Upper lobe of right lung (tissue), 1 donor: ENCODE measurements at regions of chr20 and their contacts with region 1.

Region 1: DNA sequence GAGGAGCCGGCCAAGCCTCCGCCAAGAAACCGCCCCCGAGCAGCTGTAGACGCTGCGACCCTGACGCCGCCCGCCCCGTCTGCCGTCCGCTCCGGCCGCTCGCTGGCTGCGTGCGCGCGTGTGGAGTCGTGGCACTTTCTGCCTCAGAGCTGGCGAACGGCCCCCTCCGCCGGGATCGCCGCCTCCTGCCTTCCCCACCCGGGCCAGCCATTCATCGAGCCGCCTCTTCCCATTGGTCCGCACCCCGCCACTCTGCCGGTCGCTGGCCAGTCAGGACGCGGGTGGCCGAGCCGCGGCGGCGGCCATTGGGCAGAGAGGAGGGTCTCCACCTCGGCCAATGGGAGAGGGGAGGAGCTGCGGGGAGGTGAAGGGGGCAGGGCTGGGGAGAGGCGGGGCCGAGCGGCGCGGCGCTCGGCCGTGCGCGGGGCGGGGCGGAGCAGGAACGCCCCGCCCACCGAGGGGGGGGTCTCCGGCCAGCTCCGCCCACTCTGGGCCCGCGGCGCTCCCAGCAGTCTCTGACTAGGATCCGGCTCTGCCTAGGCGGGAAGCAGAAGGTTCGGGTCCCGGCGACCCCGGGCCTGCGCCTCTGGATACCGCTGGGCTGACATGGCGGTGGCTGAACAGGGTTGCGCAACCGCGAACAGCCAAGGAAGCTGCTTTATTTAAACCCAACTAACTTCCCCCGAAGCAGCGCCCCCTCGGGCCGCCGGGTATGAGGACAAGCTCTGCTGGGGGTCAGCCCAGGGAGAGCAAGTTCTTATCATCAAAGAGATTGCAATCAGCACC is at the start of gene RRBP1:
- DNase-seq: peak; percentile 100
- ATAC-seq: peak; percentile 94
- H3K4me3 ChIP-seq: peak within 1 kb of the TSS; percentile 73
- H3K27ac ChIP-seq: peak within 1 kb of the TSS; percentile 95
- H3K4me1 ChIP-seq: peaks cover 34% of the 10 kb centered on the region
- H3K27me3 ChIP-seq: no peaks in the 10 kb centered on the region
- CTCF ChIP-seq: peak; percentile 72
- total RNA-seq, gene RRBP1: 166 TPM

Region 2: GRCh38 chr20:17343656-17344452 is 338.4 kb before region 1 on chr20:
- intact Hi-C with region 1: no loop called
- DNase-seq: no peak
- ATAC-seq: peak; percentile 52
- H3K4me3 ChIP-seq: no peak overlapping the region
- H3K27ac ChIP-seq: no peak overlapping the region
- H3K4me1 ChIP-seq: no peaks in the 10 kb centered on the region
- H3K27me3 ChIP-seq: no peaks in the 10 kb centered on the region
- CTCF ChIP-seq: no peak

Region 3: DNA sequence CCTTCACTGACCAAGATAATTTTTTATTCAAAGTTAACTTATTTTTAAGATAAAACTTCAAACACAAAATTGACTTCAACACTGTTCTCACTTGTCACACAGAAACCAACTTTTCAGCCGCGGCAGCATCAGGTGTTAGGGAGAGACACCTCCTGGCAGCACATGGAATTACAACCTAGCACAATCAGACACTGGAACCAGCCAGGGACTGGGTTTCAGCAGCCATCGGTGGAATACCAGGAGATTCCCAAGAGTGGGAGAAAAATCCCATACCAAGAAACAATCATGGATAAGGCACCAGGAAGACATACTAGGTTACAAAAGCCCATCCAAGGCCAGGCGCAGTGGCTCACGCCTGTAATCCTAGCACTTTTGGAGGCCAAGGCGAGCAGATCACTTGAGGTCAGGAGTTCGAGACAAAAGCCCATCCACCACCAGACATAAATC is 216.3 kb after region 1 on chr20:
- intact Hi-C with region 1: loop called (anchors 10 kb)
- DNase-seq: peak; percentile 73
- ATAC-seq: peak; percentile 86
- H3K4me3 ChIP-seq: no peak overlapping the region
- H3K27ac ChIP-seq: no peak overlapping the region
- H3K4me1 ChIP-seq: peaks cover 25% of the 10 kb centered on the region
- H3K27me3 ChIP-seq: no peaks in the 10 kb centered on the region
- CTCF ChIP-seq: peak; percentile 97